Activated CD4-positive, alpha-beta T cell treated with anti-CD3 and anti-CD28 coated beads, Interleukin-2, amount 10 ng/mL, durations not matched to agents 24 days and 14 days (primary cell): ENCODE measurements at regions of chr17 and their contacts with region 1.

Region 1: DNA sequence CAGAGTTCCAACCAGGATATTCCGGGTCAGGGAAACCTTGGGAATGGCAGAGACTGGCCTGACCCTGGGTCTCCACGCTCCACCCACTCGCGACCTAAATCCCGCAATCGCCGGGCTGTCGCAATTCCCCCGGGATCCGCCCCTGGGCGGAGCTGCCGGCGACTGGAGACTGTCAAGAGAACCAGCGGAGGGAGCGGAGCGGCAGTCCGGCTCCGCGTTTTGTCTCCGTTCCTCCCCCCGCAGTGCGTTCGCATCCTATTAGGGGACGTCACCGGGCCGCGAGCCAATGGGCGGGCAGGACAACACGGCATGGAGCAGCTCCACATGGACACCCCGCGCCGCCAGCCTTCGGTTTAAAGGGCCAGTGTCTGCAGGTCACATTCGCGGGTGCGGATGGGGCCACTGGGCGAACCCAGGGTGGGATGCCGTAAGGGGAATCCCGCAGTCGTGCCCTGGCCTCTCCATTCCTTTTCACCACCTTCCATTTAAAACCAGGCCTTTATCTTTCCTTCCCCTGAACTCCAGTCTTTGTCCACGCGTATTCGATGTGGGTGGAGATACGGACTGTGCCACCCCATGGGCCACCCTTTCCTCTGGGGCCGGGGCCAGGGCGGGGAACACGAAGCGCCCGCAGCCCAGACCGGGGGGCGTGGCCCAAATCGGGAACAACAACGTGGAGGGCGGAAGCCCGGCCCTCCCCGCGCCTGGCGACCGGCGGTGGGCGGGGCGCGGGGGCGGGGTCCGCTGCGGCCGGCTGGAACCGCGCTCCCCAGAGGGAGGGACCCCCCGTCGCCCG is 764 bp upstream of the MNT start:
- DNase-seq: peak; percentile 100
- H3K4me3 Mint-ChIP-seq: peak overlapping the region; percentile 99
- H3K27ac Mint-ChIP-seq: peak overlapping the region; percentile 98
- H3K4me1 Mint-ChIP-seq: peaks cover 54% of the 10 kb centered on the region
- H3K27me3 Mint-ChIP-seq: no peaks in the 10 kb centered on the region

Region 2: GRCh38 chr17:2041561-2042366 is 359.9 kb before region 1 on chr17 and contains the start of gene OVCA2:
- intact Hi-C with region 1: loop called (anchors 2 kb)
- DNase-seq: peak; percentile 100
- H3K4me3 Mint-ChIP-seq: peak within 1 kb of the TSS; percentile 92
- H3K27ac Mint-ChIP-seq: peak within 1 kb of the TSS; percentile 94
- H3K4me1 Mint-ChIP-seq: peaks cover 15% of the 10 kb centered on the region
- H3K27me3 Mint-ChIP-seq: no peaks in the 10 kb centered on the region
- total RNA-seq, gene OVCA2: 36.5 and 37.7 TPM in 2 replicates

Region 3: GRCh38 chr17:2303204-2304188 is 98.1 kb before region 1 on chr17 and contains the starts of genes SMG6 and SRR:
- intact Hi-C with region 1: loop called (anchors 1 kb)
- DNase-seq: peak; percentile 97
- H3K4me3 Mint-ChIP-seq: peak within 1 kb of the TSS; percentile 91
- H3K27ac Mint-ChIP-seq: peak within 1 kb of the TSS; percentile 84
- H3K4me1 Mint-ChIP-seq: peaks cover 35% of the 10 kb centered on the region
- H3K27me3 Mint-ChIP-seq: no peaks in the 10 kb centered on the region
- total RNA-seq, gene SMG6: 31.6 and 36.2 TPM in 2 replicates
- total RNA-seq, gene SRR: 13.8 and 15.6 TPM in 2 replicates

Region 4: GRCh38 chr17:2363851-2364762 is 37.5 kb before region 1 on chr17:
- intact Hi-C with region 1: no loop called
- DNase-seq: no peak
- H3K4me3 Mint-ChIP-seq: no peak overlapping the region
- H3K27ac Mint-ChIP-seq: no peak overlapping the region
- H3K4me1 Mint-ChIP-seq: no peaks in the 10 kb centered on the region
- H3K27me3 Mint-ChIP-seq: no peaks in the 10 kb centered on the region

Region 5: GRCh38 chr17:2416010-2416734 is 14.5 kb after region 1 on chr17:
- intact Hi-C with region 1: loop called (anchors 1 kb)
- DNase-seq: peak; percentile 96
- H3K4me3 Mint-ChIP-seq: no peak overlapping the region
- H3K27ac Mint-ChIP-seq: no peak overlapping the region
- H3K4me1 Mint-ChIP-seq: peaks cover 3% of the 10 kb centered on the region
- H3K27me3 Mint-ChIP-seq: no peaks in the 10 kb centered on the region

Region 6: GRCh38 chr17:2592971-2593820 is 191.6 kb after region 1 on chr17 and contains the start of gene PAFAH1B1:
- intact Hi-C with region 1: loop called (anchors 5 kb)
- DNase-seq: peak; percentile 99
- H3K4me3 Mint-ChIP-seq: peak within 1 kb of the TSS; percentile 90
- H3K27ac Mint-ChIP-seq: peak within 1 kb of the TSS; percentile 96
- H3K4me1 Mint-ChIP-seq: peaks cover 27% of the 10 kb centered on the region
- H3K27me3 Mint-ChIP-seq: peaks cover 3% of the 10 kb centered on the region
- total RNA-seq, gene PAFAH1B1: 166 and 170 TPM in 2 replicates

Region 7: DNA sequence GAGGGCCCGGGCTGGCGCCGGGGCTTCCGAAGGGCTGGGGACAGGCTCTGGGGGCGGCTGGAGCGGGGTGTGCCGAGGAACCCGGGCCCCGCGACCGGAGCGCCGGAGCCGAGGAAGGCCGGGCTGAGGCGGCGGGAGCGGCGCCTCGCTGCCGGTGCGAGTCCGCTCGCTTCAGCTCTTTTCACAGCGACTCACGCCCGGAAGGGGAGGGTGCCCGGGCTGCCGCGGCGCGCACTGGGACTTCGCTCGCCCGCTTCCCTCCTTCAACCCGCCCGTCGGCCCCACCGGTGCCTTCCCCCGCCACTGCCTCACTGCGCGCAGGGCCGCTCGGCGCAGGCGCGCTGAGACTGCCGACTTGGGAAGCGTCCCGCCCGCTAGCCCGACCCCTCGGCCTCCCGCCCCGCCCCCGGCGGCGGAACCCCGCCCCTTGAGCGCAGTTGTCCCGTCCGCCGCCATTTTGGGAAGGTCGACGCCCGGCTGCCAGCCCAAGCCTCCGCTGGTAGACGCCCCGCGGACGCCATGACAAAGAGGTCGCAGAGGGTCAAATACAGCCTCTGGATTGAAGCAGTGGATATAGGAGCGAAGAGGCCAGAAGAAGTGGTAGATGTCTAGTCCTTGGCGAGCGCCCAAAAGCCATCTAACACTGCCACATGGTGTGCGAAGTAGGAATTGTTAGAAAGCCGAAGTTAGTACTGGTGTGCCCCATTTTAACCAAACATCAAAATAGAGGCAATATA is 1964.9 kb after region 1 on chr17 and contains the start of gene UBE2G1:
- intact Hi-C with region 1: loop called (anchors 5 kb)
- DNase-seq: peak; percentile 99
- H3K4me3 Mint-ChIP-seq: peak within 1 kb of the TSS; percentile 77
- H3K27ac Mint-ChIP-seq: peak within 1 kb of the TSS; percentile 96
- H3K4me1 Mint-ChIP-seq: peaks cover 26% of the 10 kb centered on the region
- H3K27me3 Mint-ChIP-seq: no peaks in the 10 kb centered on the region
- total RNA-seq, gene UBE2G1: 74.8 and 77.3 TPM in 2 replicates